Lower leg skin (tissue), 4 donors: ENCODE measurements at regions of chrX and their contacts with region 1.

Region 1: DNA sequence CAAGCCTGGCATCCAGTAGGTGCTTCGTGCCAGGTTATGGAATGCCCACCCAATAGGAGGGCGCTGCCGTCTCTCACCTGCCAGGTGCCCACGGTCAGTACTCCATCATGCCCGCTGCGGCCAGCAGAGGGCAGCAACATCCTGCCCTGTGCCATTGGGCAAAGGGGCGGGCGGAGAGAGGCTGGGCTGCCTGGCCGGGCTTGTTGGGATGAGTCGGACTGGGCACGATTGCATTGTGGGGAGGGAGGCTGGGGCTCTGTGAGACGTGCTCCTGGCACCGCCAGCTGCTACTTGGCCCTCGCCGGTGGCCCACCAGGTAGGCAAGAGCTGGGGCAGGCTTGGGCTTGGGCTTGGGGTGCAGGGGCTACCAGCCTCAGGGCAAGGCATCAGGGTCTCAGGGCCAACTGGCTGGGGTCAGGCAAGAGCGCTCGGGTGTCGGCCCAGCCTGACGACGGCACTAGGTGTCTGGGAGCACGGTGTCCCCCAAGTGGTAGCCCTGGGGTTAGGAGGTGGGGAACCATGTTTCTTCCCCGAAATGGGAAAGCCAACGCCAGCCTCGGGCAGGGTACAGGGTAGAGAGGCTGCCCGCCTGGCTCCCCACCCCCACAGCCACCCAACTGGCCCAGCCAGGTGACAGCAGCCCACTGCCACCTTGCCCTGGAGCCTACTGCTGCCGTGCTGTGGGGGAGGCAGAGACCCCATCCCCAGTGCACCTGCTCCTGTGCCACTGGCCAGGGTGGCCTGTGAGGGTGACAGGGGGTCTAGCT is at the start of gene PLXNB3:
- DNase-seq: peak; percentile 69 to 93
- H3K4me3 ChIP-seq: no peak within 1 kb of the TSS
- CTCF ChIP-seq: peak in 1 of 3 donors; percentile 62
- POLR2A ChIP-seq: no peak
- total RNA-seq, gene PLXNB3: 10.9 to 21.9 (median 12.3) TPM

Region 2: GRCh38 chrX:153794018-153794896 is 30.1 kb after region 1 on chrX and contains the starts of genes IDH3G and SSR4:
- intact Hi-C with region 1: no loop called
- DNase-seq: peak; percentile 88 to 98
- H3K4me3 ChIP-seq: peak within 1 kb of the TSS; percentile 60
- CTCF ChIP-seq: no peak
- POLR2A ChIP-seq: no peak
- total RNA-seq, gene IDH3G: 66.2 to 94.8 (median 76.1) TPM
- total RNA-seq, gene SSR4: 90.2 to 169 (median 156) TPM

Region 3: DNA sequence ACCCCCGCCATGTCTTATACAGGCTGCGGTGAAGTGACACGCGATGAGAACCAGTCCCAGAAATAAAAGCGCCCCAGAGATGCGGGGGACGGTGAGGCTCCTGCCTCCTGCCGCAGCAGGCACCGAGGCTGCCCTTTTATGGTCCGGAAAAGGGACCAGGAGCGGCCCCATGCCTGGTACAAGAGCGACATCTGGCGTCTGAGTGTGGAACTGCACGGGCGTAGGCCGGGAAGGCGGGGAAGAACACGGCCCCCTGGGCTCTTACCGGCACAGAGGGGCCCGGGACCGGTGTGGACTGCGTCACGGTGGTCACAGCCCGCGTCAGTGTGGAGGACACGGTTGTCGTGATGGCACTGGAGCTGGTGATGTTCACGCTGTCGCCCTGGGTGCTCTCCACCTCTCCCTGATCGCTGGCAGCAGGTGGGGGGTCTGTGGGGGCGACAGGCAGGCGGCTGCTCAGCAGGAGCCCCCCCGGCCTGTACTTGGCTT is 189.2 kb after region 1 on chrX:
- intact Hi-C with region 1: loop called (anchors 5 kb)
- DNase-seq: peak in 1 of 2 donors; percentile 94
- H3K4me3 ChIP-seq: no peak overlapping the region
- CTCF ChIP-seq: peak in 1 of 3 donors; percentile 65
- POLR2A ChIP-seq: no peak